ENCODE measurements at regions of chr2 and their contacts with region 1.

Region 1: GRCh38 chr2:211085056-211085680 is 528.8 kb downstream of the CPS1 start:
- DNase-seq: peak in 1 of 2 experiments; percentile 45
- H3K4me3 ChIP-seq: no peak overlapping the region
- H3K4me3 Mint-ChIP-seq: no peak overlapping the region
- H3K27ac Mint-ChIP-seq: no peak overlapping the region
- H3K4me1 ChIP-seq: no peaks in the 10 kb centered on the region
- H3K4me1 Mint-ChIP-seq: no peaks in the 10 kb centered on the region
- H3K27me3 ChIP-seq: no peaks in the 10 kb centered on the region
- H3K27me3 Mint-ChIP-seq: peaks cover 3% of the 10 kb centered on the region
- CTCF ChIP-seq: peak; percentile 65 to 70

Region 2: GRCh38 chr2:210252699-210253606 is 832.2 kb before region 1 on chr2:
- CTCF ChIA-PET with region 1: no interaction called
- POLR2A ChIA-PET with region 1: no interaction called
- intact Hi-C with region 1: loop called (anchors 10 kb)
- DNase-seq: no peak
- H3K4me3 ChIP-seq: no peak overlapping the region
- H3K4me3 Mint-ChIP-seq: no peak overlapping the region
- H3K27ac Mint-ChIP-seq: no peak overlapping the region
- H3K4me1 ChIP-seq: no peaks in the 10 kb centered on the region
- H3K4me1 Mint-ChIP-seq: no peaks in the 10 kb centered on the region
- H3K27me3 ChIP-seq: no peaks in the 10 kb centered on the region; the same call in 1 of the 2 replicates
- H3K27me3 Mint-ChIP-seq: peaks cover 5% of the 10 kb centered on the region
- CTCF ChIP-seq: no peak

Region 3: DNA sequence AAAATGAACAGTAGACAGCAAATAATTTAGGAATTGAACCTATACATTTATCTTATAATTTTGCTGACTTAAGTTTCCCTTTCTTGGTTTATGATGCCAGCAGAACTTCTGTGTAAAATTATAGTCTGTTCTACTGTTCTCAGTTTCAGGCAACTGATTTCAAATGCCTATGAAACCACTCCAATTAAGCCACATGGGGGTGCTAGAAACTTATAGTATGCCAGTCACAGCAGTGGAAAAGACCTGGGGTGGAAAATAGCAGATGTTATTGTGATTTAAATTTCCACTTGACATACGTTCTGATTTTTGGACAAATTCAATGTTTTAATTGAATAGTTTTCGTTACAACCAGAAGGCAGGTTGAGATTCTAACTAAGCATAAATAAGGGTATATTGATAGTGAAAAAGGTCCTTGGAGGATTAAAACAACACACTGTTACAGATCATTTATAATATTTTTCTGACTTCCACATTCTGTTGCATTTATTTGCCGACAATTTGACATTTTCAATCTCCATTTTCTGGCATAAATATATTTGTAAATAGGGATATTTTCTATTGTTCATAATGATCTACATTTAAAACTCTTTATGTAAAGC is 467.3 kb before region 1 on chr2:
- CTCF ChIA-PET with region 1: no interaction called
- POLR2A ChIA-PET with region 1: no interaction called
- intact Hi-C with region 1: loop called (anchors 5 kb)
- DNase-seq: peak in 1 of 2 experiments; percentile 52
- H3K4me3 ChIP-seq: no peak overlapping the region
- H3K4me3 Mint-ChIP-seq: no peak overlapping the region
- H3K27ac Mint-ChIP-seq: no peak overlapping the region
- H3K4me1 ChIP-seq: no peaks in the 10 kb centered on the region
- H3K4me1 Mint-ChIP-seq: no peaks in the 10 kb centered on the region
- H3K27me3 ChIP-seq: no peaks in the 10 kb centered on the region
- H3K27me3 Mint-ChIP-seq: no peaks in the 10 kb centered on the region
- CTCF ChIP-seq: peak; percentile 60 to 72

Region 4: DNA sequence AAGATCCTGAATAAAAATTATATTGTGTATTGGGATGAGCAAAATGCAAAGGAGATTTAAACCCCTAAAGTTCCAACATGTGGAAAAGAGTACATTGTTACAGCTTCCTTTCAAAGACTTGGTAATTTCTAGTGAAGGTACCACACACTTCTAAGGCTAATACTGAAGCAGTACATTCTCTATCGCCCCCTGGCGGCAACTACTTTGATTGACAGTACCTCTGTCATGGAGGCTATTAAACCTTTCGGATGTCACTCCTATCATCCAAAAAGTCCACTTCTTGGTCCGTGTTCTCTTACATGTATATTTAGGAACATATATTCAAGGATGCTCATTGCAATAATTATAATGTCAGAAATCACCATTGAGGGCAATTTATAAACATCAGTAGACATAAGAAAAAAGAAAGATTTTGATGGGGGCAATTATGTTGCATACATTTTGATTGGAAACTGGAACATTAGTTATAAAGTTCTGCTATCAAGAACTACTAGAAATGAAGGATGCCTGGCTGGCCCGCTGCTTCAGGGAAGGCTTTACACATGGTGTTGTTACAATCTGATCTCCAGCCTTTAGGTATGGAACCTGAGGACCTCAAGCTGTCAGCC is 72.8 kb after region 1 on chr2:
- CTCF ChIA-PET with region 1: no interaction called
- POLR2A ChIA-PET with region 1: no interaction called
- intact Hi-C with region 1: loop called (anchors 1 kb)
- DNase-seq: peak; percentile 71 to 75
- H3K4me3 ChIP-seq: no peak overlapping the region
- H3K4me3 Mint-ChIP-seq: no peak overlapping the region
- H3K27ac Mint-ChIP-seq: no peak overlapping the region
- H3K4me1 ChIP-seq: no peaks in the 10 kb centered on the region
- H3K4me1 Mint-ChIP-seq: no peaks in the 10 kb centered on the region
- H3K27me3 ChIP-seq: no peaks in the 10 kb centered on the region
- H3K27me3 Mint-ChIP-seq: no peaks in the 10 kb centered on the region
- CTCF ChIP-seq: peak; percentile 76 to 84

Region 5: DNA sequence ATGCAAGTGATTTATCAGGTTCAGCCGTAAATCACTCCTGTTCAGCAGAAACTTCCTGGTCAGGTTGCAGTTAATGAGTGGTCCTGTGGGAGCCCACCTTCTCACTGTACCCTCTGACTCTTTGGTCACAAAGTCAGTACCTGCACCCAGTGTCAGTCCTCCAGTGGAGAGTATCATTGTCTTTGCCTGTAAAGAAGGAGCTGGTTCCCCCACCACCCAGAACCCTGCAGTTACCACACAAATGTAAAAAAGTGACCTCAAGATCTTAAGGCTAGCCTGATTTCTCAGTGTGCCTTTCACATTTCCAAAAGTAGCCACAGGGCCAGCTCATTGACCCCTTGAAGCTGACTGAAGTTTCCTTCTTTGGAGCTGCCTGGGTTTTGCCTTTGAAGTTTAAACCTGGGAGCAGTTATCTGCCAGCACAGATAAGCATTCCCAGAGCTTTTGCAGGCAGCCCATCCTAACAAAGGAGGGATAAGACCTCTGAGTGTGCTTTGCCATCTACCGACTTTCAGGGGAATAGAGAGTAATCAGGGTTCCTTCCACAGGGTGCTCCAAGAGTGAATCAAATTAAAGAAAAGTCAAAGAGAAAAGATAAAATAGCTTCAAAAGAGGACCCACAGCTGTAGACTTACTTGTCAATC is 196.4 kb after region 1 on chr2:
- CTCF ChIA-PET with region 1: no interaction called
- POLR2A ChIA-PET with region 1: no interaction called
- intact Hi-C with region 1: loop called (anchors 1 kb)
- DNase-seq: peak; percentile 48 to 59
- H3K4me3 ChIP-seq: no peak overlapping the region
- H3K4me3 Mint-ChIP-seq: no peak overlapping the region
- H3K27ac Mint-ChIP-seq: no peak overlapping the region
- H3K4me1 ChIP-seq: peaks cover 15% of the 10 kb centered on the region
- H3K4me1 Mint-ChIP-seq: peaks cover 13% of the 10 kb centered on the region
- H3K27me3 ChIP-seq: no peaks in the 10 kb centered on the region
- H3K27me3 Mint-ChIP-seq: no peaks in the 10 kb centered on the region
- CTCF ChIP-seq: peak in 1 of 2 experiments; percentile 29